ENCODE measurements at regions of chr5 and their contacts with region 1.

Region 1: GRCh38 chr5:132419502-132420468 is 50.3 kb downstream of the SLC22A5 start:
- DNase-seq: peak; percentile 87
- H3K4me3 Mint-ChIP-seq: no peak overlapping the region
- H3K27ac Mint-ChIP-seq: no peak overlapping the region
- H3K4me1 Mint-ChIP-seq: peaks cover 51% of the 10 kb centered on the region
- H3K27me3 Mint-ChIP-seq: no peaks in the 10 kb centered on the region
- CTCF ChIP-seq: peak; percentile 91

Region 2: DNA sequence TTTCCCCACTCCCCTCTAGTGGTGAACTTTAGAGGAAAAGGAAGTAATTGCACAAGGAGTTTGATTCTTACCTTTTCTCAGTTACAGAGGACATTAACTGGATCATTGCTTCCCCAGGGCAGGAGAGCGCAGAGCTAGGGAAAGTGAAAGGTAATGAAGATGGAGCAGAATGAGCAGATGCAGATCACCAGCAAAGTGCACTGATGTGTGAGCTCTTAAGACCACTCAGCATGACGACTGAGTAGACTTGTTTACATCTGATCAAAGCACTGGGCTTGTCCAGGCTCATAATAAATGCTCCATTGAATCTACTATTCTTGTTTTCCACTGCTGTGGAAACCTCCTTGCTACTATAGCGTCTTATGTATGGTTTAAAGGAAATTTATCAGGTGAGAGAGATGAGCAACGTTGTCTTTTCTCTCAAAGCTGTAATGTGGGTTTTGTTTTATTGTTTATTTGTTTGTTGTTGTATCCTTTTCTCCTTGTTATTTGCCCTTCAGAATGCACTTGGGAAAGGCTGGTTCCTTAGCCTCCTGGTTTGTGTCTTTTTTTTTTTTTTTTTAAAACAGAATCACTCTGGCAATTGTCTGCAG is 25.0 kb before region 1 on chr5:
- CTCF ChIA-PET with region 1: no interaction called
- intact Hi-C with region 1: no loop called
- DNase-seq: no peak
- H3K4me3 Mint-ChIP-seq: no peak overlapping the region
- H3K27ac Mint-ChIP-seq: no peak overlapping the region
- H3K4me1 Mint-ChIP-seq: peaks cover 13% of the 10 kb centered on the region
- H3K27me3 Mint-ChIP-seq: no peaks in the 10 kb centered on the region
- CTCF ChIP-seq: no peak

Region 3: GRCh38 chr5:132464156-132464971 is 44.6 kb after region 1 on chr5:
- CTCF ChIA-PET with region 1: interaction called, 6 read pairs
- intact Hi-C with region 1: loop called (anchors 1 kb)
- DNase-seq: peak; percentile 43
- H3K4me3 Mint-ChIP-seq: peak overlapping the region; percentile 45
- H3K27ac Mint-ChIP-seq: peak overlapping the region; percentile 9
- H3K4me1 Mint-ChIP-seq: peaks cover 72% of the 10 kb centered on the region
- H3K27me3 Mint-ChIP-seq: no peaks in the 10 kb centered on the region
- CTCF ChIP-seq: peak; percentile 38

Measured in Calu3 (cell line).